Psoas muscle (tissue), 8 donors: ENCODE measurements at regions of chr3 and their contacts with region 1.

Region 1: GRCh38 chr3:14651440-14652251 is at the start of gene CCDC174:
- DNase-seq: peak; percentile 92 to 96
- ATAC-seq: peak; percentile 98 to 99 (median 98)
- H3K4me3 ChIP-seq: peak within 1 kb of the TSS; percentile 95
- H3K27ac ChIP-seq: peak within 1 kb of the TSS; percentile 88
- H3K4me1 ChIP-seq: peaks cover 31% of the 10 kb centered on the region
- H3K27me3 ChIP-seq: no peaks in the 10 kb centered on the region
- CTCF ChIP-seq: no peak
- total RNA-seq, gene CCDC174: 11.6 to 24.1 (median 13.4) TPM

Region 2: DNA sequence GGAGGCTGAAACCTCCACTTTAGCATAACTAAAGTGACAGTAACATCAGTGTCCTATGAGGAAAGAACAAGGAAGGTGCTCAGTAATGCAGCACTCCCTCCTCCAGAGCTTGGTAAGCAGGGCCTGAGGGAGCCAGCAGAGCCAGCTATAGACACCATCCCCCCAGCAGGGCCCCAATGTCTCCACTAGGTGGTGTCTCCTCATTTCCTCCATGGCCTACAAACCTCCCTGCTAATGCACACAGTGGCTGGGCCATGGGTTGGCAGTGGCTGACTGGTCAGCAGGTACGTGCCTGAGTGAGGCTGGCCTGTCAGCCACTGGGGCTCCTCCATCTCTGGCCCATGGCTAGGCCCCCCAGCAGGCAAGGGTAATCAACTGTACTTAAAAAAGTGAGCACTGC is 399.9 kb after region 1 on chr3:
- intact Hi-C with region 1: loop called in 1 of 2 experiments (anchors 10 kb)
- DNase-seq: peak in 1 of 2 donors; percentile 63
- ATAC-seq: peak; percentile 58 to 85 (median 80)
- H3K4me3 ChIP-seq: no peak overlapping the region
- H3K27ac ChIP-seq: no peak overlapping the region
- H3K4me1 ChIP-seq: no peaks in the 10 kb centered on the region
- H3K27me3 ChIP-seq: no peaks in the 10 kb centered on the region
- CTCF ChIP-seq: peak; percentile 30